Posterior vena cava (tissue), 2 donors: ENCODE measurements at regions of chr21 and their contacts with region 1.

Region 1: GRCh38 chr21:31668651-31669491 is 9.4 kb downstream of the SOD1 start:
- DNase-seq: no peak

Region 2: DNA sequence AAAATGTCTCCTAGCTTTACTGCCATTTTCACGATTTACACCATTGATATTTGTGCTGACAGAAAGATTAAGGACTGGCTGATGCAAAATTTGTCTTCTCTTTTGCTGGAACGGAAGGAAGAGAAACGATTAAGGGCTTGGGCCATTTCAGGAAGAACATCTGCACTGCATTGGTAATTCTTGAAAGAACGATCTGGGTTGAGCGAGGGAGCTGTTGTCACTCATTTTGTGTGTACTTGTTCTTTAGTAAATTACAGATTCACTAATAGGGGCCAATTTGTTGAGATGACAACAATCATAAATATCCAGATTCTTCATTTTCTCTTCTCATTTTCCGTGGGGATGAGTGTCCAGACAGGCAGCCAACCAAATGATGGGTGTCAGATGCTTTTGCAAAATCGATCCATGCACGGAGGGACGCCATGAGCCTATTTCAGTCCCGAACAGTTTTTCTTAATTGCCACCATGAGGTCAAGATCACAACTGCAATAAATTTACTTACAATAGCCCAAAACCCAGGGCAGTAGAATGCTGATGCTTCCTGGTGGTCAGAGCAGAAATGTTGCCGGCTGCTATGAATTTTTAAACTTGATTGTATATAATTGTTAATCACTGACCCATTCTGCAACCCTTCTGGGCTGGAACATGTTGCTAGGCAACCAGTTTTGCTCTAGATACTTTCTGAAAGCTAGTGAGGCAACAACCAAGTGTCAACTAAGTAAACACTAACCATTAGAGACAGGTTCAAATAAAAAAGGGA is 192.4 kb before region 1 on chr21:
- intact Hi-C with region 1: no loop called
- DNase-seq: peak; percentile 31

Region 3: DNA sequence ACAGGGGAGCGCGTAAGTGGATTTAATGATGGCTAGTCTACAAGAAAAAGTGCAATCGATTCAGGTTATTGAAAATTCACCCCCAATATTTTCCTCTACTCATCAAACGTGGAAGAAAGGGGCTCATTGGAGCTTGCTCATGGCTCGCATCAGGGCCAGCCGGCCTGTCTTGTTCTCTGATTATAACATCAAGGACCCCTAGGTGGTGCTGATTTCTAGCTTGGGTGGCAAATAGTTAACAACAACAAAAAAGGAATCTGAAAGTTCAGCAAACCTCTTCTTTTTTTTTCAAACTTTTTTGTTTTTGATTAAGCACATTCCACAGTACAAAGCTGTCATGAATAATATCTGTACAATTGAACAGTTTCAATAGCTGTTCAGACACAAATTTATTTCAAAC is 45.2 kb before region 1 on chr21:
- intact Hi-C with region 1: no loop called
- DNase-seq: peak; percentile 18

Region 4: GRCh38 chr21:31647650-31648049 is 21.2 kb before region 1 on chr21:
- intact Hi-C with region 1: no loop called
- DNase-seq: no peak

Region 5: DNA sequence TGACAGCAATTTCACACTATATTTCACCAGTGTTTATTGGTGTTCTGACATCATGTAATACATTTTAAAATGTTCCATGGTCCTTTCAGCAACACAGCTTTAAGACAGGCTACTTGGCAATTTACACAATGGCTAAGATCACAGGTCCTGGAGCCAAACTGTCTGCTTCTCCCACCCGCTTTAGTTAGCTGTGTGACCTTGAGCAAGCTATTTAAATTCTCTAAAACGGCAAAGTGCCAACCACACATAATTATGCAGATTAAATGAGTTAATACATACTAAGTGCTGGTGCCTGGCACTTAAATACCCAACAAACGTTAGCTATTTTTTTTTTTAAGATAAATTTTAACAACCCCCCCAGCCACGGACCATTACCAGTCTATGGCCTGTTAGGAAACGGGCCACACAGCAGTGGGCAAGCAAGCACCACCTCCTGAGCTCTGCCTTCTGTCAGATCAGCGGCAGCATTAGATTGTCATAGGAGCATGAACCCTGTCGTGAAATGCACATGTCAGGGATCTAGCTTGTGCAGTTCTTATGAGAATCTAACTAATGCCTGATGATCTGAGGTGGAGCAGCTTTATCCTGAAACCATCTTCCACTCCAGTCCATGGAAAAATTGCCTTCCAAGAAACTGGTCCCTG is 17.5 kb after region 1 on chr21:
- intact Hi-C with region 1: loop called in 1 of 2 experiments (anchors 1 kb)
- DNase-seq: no peak

Region 6: GRCh38 chr21:31813862-31814261 is 145.0 kb after region 1 on chr21:
- intact Hi-C with region 1: no loop called
- DNase-seq: no peak